ENCODE measurements at regions of chr12 and their contacts with region 1.

Region 1: DNA sequence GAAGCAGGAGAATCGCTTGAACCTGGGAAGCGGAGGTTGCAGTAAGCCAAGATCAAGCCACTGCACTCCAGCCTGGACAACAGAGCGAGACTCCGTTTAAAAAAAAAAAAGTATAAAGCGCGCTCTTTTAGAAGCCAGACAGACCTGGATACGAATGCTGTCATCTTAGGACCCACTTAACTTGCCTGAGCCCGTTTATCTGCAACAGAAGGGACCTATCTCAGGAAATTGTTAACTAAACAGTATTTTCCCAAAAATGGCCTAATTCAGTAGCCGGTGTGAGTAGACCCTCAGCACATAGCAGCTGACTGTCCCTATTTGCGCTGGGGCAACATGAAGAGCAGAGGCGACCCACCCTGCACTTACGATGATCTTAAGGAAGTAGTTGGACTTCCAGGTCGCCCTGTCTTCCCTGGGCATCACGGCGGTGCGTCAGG is 529 bp downstream of the RPLP0 start:
- DNase-seq: no peak
- ATAC-seq: no peak
- H3K4me3 ChIP-seq: peak overlapping the region; percentile 98
- H3K4me3 Mint-ChIP-seq: peak overlapping the region; percentile 92 to 99 (median 96)
- H3K27ac ChIP-seq: peak overlapping the region; percentile 84
- H3K27ac Mint-ChIP-seq: peak overlapping the region; percentile 94 to 100 (median 97)
- H3K4me1 ChIP-seq: peaks cover 18 to 20% of the 10 kb centered on the region in 2 donors
- H3K4me1 Mint-ChIP-seq: peaks cover 20 to 53% (median 38%) of the 10 kb centered on the region in 7 donors
- H3K27me3 ChIP-seq: no peaks in the 10 kb centered on the region
- H3K27me3 Mint-ChIP-seq: no peaks in the 10 kb centered on the region

Region 2: GRCh38 chr12:120110550-120111501 is 89.6 kb before region 1 on chr12:
- CTCF ChIA-PET with region 1: no interaction called
- POLR2A ChIA-PET with region 1: interaction called, 47 read pairs
- intact Hi-C with region 1: loop called (anchors 1 kb)
- DNase-seq: peak in 8 of 9 donors; percentile 34 to 58 (median 51)
- ATAC-seq: peak; percentile 90
- H3K4me3 ChIP-seq: peak overlapping the region; percentile 44
- H3K4me3 Mint-ChIP-seq: peak overlapping the region; percentile 72 to 90 (median 78)
- H3K27ac ChIP-seq: peak overlapping the region; percentile 62
- H3K27ac Mint-ChIP-seq: peak overlapping the region; percentile 44 to 93 (median 81)
- H3K4me1 ChIP-seq: peaks cover 45 to 52% of the 10 kb centered on the region in 2 donors
- H3K4me1 Mint-ChIP-seq: peaks cover 50 to 86% (median 72%) of the 10 kb centered on the region in 7 donors
- H3K27me3 ChIP-seq: no peaks in the 10 kb centered on the region
- H3K27me3 Mint-ChIP-seq: no peaks in the 10 kb centered on the region

Region 3: DNA sequence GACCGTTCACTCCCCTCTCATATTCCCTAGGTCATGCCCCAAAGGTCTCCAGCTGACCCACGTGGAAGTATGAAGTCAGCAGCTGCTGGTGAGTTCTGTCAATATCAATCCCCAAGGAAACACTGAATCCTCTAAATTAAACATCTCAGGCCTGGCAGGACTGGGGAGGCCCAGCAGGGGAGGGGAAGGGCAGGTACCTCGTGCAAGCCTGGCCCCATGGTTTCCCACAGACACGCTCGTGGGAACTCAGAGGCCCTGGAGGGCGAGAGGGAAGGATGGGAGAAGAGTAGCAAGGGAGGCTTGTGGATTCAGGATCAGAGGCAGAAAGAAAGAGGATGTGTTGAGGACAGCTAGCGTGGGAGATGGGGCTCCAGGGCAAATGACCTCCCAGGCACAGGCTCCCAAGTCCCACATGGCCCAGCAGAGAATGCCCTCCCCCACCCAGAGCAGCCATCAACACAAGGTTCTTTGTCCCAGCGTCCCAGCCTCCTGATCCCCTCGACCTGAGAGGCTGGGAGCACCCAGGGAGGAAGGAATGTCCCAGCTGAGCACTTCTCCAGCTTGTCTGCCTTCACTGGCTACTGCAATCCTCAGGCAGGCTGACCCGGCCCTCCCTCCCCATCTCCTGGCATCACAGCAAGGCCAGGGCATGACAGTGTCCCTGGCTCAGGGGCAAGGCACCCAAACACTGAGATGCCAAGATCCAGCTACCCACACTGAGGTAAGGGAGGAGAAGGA is 20.6 kb after region 1 on chr12:
- CTCF ChIA-PET with region 1: interaction called, 21 read pairs
- POLR2A ChIA-PET with region 1: interaction called, 10 read pairs
- intact Hi-C with region 1: loop called in 1 of 2 experiments (anchors 2 kb)
- DNase-seq: no peak
- ATAC-seq: no peak
- H3K4me3 ChIP-seq: no peak overlapping the region
- H3K4me3 Mint-ChIP-seq: no peak overlapping the region
- H3K27ac ChIP-seq: no peak overlapping the region
- H3K27ac Mint-ChIP-seq: peak overlapping the region in 2 of 9 donors; percentile 32 to 39
- H3K4me1 ChIP-seq: peaks cover 5 to 12% of the 10 kb centered on the region in 2 donors
- H3K4me1 Mint-ChIP-seq: peaks cover 9 to 21% (median 15%) of the 10 kb centered on the region in 7 donors
- H3K27me3 ChIP-seq: no peaks in the 10 kb centered on the region
- H3K27me3 Mint-ChIP-seq: no peaks in the 10 kb centered on the region

Measured in naive thymus-derived CD4-positive, alpha-beta T cell (primary cell).